ENCODE measurements at regions of chr6 and their contacts with region 1.

Region 1: GRCh38 chr6:157954150-157955117 is 27.2 kb upstream of the SYNJ2 start:
- DNase-seq: peak; percentile 92 to 95
- H3K4me3 ChIP-seq: peak overlapping the region; percentile 31
- H3K4me3 Mint-ChIP-seq: peak overlapping the region; percentile 73
- H3K27ac Mint-ChIP-seq: peak overlapping the region; percentile 99
- H3K4me1 ChIP-seq: peaks cover 33% of the 10 kb centered on the region
- H3K4me1 Mint-ChIP-seq: peaks cover 26% of the 10 kb centered on the region
- H3K27me3 ChIP-seq: no peaks in the 10 kb centered on the region
- H3K27me3 Mint-ChIP-seq: no peaks in the 10 kb centered on the region
- CTCF ChIP-seq: peak; percentile 30 to 48

Region 2: DNA sequence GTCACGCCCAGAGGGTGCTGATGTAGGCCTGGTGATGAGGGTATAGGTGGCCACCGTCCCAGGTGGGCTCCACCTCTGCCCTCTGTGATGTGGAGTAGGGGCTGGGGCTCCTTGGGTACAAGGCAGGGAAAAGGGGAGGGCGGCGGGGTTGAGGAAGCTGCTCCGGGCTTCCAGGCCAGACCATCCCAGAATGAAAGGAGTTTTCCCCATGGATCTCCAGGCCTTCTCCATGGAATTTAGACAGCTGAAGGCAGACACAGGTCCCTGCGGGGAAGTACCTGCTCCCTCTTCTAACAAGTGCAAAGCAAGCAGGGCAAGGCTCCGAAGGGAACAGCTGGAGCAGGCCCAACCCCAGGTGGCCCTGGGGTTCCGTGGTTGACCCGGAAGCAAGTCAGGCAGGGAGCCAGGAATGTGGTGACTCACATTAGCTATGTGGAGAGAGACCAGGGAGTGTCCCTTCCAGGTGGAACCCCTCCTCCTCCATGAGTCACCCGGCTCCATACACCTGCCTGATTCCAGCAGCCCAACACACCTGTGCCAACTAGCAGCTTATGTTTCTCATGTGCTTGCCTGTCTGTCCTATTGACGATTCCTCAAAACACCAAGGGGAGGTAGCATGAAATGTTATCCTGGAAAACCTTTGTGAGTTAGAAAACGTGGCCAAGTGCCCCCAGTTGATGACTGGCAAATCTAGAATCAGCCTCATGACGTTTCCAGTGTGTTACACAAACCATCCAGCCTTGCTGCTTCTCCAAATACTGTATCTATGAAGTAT is 191.1 kb before region 1 on chr6:
- CTCF ChIA-PET with region 1: no interaction called
- POLR2A ChIA-PET with region 1: interaction called, 3 read pairs
- intact Hi-C with region 1: loop called (anchors 2 kb)
- DNase-seq: peak; percentile 93 to 96
- H3K4me3 ChIP-seq: no peak overlapping the region
- H3K4me3 Mint-ChIP-seq: peak overlapping the region; percentile 30
- H3K27ac Mint-ChIP-seq: peak overlapping the region; percentile 94
- H3K4me1 ChIP-seq: peaks cover 30% of the 10 kb centered on the region
- H3K4me1 Mint-ChIP-seq: peaks cover 47% of the 10 kb centered on the region
- H3K27me3 ChIP-seq: no peaks in the 10 kb centered on the region
- H3K27me3 Mint-ChIP-seq: no peaks in the 10 kb centered on the region
- CTCF ChIP-seq: no peak

Region 3: DNA sequence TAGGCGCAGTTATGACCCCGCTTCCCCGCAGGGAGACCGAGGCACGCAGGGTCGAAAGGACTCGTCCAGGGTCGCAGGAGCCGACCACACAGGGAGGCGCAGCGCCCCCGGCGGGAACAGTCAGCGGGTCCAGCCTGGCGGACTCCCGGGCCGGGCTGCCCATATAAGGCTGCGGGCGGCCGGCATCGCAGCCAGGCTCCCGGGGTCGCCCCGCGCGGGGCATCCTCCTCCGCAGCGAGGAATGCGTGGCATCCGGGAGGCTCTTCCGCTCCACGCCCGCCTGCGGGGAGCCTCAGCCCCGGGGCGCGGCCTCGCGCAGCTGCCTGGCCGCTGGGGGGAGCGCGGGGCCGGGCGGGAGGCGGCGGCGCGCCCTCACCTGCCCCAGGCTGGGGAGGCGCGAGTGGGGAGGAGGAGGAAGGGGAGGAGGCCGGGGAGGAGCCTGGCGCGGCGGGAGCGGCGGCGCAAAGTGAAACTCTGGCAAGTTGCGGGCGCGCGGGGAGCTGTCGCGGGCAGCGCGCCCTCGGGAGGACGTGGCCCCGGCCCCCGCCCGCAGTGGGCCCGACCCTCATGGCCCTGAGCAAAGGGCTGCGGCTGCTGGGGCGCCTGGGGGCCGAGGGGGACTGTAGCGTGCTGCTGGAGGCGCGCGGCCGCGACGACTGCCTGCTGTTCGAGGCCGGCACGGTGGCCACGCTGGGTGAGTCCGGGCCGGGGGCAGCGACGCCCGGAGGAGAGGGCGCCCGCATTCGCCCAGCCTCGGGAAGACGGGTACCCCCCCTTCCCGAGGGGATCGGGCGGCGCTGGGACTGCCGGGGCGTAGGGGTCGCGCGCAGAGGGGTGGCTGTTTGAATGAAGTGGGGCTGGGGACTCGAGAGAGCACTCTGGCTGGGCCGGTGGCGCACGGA is 27.2 kb after region 1 on chr6 and contains the start of gene SYNJ2:
- CTCF ChIA-PET with region 1: interaction called, 4 read pairs
- POLR2A ChIA-PET with region 1: interaction called, 6 read pairs
- intact Hi-C with region 1: loop called (anchors 1 kb)
- DNase-seq: peak; percentile 86 to 91
- H3K4me3 ChIP-seq: peak within 1 kb of the TSS; percentile 92
- H3K4me3 Mint-ChIP-seq: peak within 1 kb of the TSS; percentile 74
- H3K27ac Mint-ChIP-seq: peak within 1 kb of the TSS; percentile 34
- H3K4me1 ChIP-seq: peaks cover 55% of the 10 kb centered on the region
- H3K4me1 Mint-ChIP-seq: peaks cover 8% of the 10 kb centered on the region
- H3K27me3 ChIP-seq: no peaks in the 10 kb centered on the region
- H3K27me3 Mint-ChIP-seq: no peaks in the 10 kb centered on the region
- CTCF ChIP-seq: no peak
- total RNA-seq, gene SYNJ2: 45.0 and 47.9 TPM in 2 replicates

Region 4: DNA sequence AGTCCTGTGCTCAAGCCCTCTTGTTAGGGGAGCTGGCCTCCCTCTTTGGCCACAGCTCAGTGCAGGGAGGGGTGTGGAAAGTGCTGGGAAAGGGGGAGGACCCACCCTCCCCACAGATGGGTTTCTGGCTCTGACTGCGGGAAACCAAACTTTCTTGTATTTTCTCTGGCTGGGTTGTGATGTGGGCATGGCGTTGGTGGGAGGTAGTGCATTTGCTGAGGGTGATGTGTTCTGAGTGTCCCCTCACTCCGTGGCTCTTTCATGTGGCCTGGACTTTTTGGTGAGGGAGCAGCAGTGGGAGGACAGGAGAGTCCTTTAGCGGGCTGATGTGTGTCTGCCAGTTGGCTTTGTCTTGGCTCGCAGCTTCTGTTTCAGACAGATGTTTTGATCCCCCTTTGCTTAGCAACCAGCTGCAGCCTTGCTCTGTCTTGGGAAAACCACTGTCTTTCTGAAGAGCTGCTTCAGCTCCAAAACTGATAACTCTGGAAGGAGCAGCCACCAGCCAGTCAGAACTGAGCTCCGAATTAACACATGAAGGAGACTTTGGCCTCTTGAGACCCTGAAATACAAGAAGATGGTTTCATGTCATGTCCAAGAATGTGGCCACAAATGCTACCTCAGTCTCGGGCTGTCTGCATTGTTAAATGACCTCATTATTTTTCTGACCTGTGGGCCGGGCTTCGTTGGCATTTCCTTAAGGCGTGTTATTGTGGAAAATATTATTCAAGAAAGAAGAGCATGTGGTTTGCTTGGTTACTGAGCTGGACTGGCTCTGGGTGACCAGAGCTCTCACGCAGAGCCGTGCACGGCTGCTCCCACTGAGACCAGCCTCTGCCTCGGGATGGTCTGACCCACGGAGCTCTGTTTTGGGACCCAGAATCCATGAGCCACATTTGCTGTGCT is 48.8 kb after region 1 on chr6:
- CTCF ChIA-PET with region 1: no interaction called
- POLR2A ChIA-PET with region 1: interaction called, 5 read pairs
- intact Hi-C with region 1: loop called (anchors 1 kb)
- DNase-seq: peak in 1 of 2 experiments; percentile 24
- H3K4me3 ChIP-seq: no peak overlapping the region
- H3K4me3 Mint-ChIP-seq: peak overlapping the region; percentile 4
- H3K27ac Mint-ChIP-seq: peak overlapping the region; percentile 86
- H3K4me1 ChIP-seq: peaks cover 51% of the 10 kb centered on the region
- H3K4me1 Mint-ChIP-seq: peaks cover 58% of the 10 kb centered on the region
- H3K27me3 ChIP-seq: no peaks in the 10 kb centered on the region
- H3K27me3 Mint-ChIP-seq: no peaks in the 10 kb centered on the region
- CTCF ChIP-seq: no peak

Region 5: GRCh38 chr6:158072083-158072721 is 117.8 kb after region 1 on chr6:
- CTCF ChIA-PET with region 1: interaction called, 4 read pairs
- POLR2A ChIA-PET with region 1: interaction called, 3 read pairs
- intact Hi-C with region 1: loop called (anchors 1 kb)
- DNase-seq: peak; percentile 76 to 77
- H3K4me3 ChIP-seq: no peak overlapping the region
- H3K4me3 Mint-ChIP-seq: no peak overlapping the region
- H3K27ac Mint-ChIP-seq: peak overlapping the region; percentile 79
- H3K4me1 ChIP-seq: peaks cover 8% of the 10 kb centered on the region; the same call in 1 of the 2 replicates
- H3K4me1 Mint-ChIP-seq: peaks cover 7% of the 10 kb centered on the region
- H3K27me3 ChIP-seq: no peaks in the 10 kb centered on the region
- H3K27me3 Mint-ChIP-seq: no peaks in the 10 kb centered on the region
- CTCF ChIP-seq: peak; percentile 83 to 87

Region 6: GRCh38 chr6:158322724-158323560 is 368.5 kb after region 1 on chr6:
- CTCF ChIA-PET with region 1: no interaction called
- POLR2A ChIA-PET with region 1: no interaction called
- intact Hi-C with region 1: no loop called
- DNase-seq: peak; percentile 72
- H3K4me3 ChIP-seq: no peak overlapping the region
- H3K4me3 Mint-ChIP-seq: peak overlapping the region; percentile 39
- H3K27ac Mint-ChIP-seq: peak overlapping the region; percentile 74
- H3K4me1 ChIP-seq: peaks cover 35% of the 10 kb centered on the region
- H3K4me1 Mint-ChIP-seq: peaks cover 50% of the 10 kb centered on the region
- H3K27me3 ChIP-seq: no peaks in the 10 kb centered on the region
- H3K27me3 Mint-ChIP-seq: no peaks in the 10 kb centered on the region
- CTCF ChIP-seq: no peak